GM12878 (cell line): ENCODE measurements at regions of chr4 and their contacts with region 1.

Region 1: GRCh38 chr4:104752337-104752736 is 257.6 kb upstream of the CXXC4 start:
- DNase-seq: peak; percentile 48
- ATAC-seq: peak; percentile 85
- H3K4me3 ChIP-seq: no peak overlapping the region
- H3K27ac ChIP-seq: no peak overlapping the region
- H3K4me1 ChIP-seq: peaks cover 4% of the 10 kb centered on the region; the same call in 1 of the 2 replicates
- H3K27me3 ChIP-seq: no peaks in the 10 kb centered on the region
- CTCF ChIP-seq: no peak
- EP300 ChIP-seq: peak; percentile 22 to 78; a peak in 2 of 4 replicates
- POLR2A ChIP-seq: no peak
- RAD21 ChIP-seq: no peak; the same call in 1 of the 2 replicates

Region 2: GRCh38 chr4:104766676-104767075 is 14.3 kb after region 1 on chr4:
- CTCF ChIA-PET with region 1: interaction called, 3 read pairs
- POLR2A ChIA-PET with region 1: no interaction called
- RAD21 ChIA-PET with region 1: interaction called, 3 read pairs
- SMC1A ChIA-PET with region 1: interaction called, 16 read pairs
- in situ Hi-C with region 1: no loop called
- intact Hi-C with region 1: no loop called
- DNase-seq: no peak
- ATAC-seq: no peak
- H3K4me3 ChIP-seq: no peak overlapping the region
- H3K27ac ChIP-seq: no peak overlapping the region
- H3K4me1 ChIP-seq: no peaks in the 10 kb centered on the region
- H3K27me3 ChIP-seq: no peaks in the 10 kb centered on the region
- CTCF ChIP-seq: no peak
- EP300 ChIP-seq: no peak
- POLR2A ChIP-seq: no peak
- RAD21 ChIP-seq: no peak